ENCODE measurements at regions of chr4 and their contacts with region 1.

Region 1: GRCh38 chr4:47926639-47927258 is 12.4 kb upstream of the NFXL1 start:
- DNase-seq: peak; percentile 67
- H3K4me3 Mint-ChIP-seq: peak overlapping the region; percentile 73
- H3K27ac Mint-ChIP-seq: peak overlapping the region; percentile 53
- H3K4me1 Mint-ChIP-seq: peaks cover 18% of the 10 kb centered on the region
- H3K27me3 Mint-ChIP-seq: no peaks in the 10 kb centered on the region
- CTCF ChIP-seq: peak; percentile 56

Region 2: GRCh38 chr4:47713128-47713834 is 213.5 kb before region 1 on chr4:
- CTCF ChIA-PET with region 1: no interaction called
- intact Hi-C with region 1: no loop called
- DNase-seq: no peak
- H3K4me3 Mint-ChIP-seq: no peak overlapping the region
- H3K27ac Mint-ChIP-seq: no peak overlapping the region
- H3K4me1 Mint-ChIP-seq: no peaks in the 10 kb centered on the region
- H3K27me3 Mint-ChIP-seq: peaks cover 8% of the 10 kb centered on the region
- CTCF ChIP-seq: no peak

Region 3: GRCh38 chr4:47990145-47990544 is 63.4 kb after region 1 on chr4:
- CTCF ChIA-PET with region 1: no interaction called
- intact Hi-C with region 1: no loop called
- DNase-seq: no peak
- H3K4me3 Mint-ChIP-seq: no peak overlapping the region
- H3K27ac Mint-ChIP-seq: no peak overlapping the region
- H3K4me1 Mint-ChIP-seq: no peaks in the 10 kb centered on the region
- H3K27me3 Mint-ChIP-seq: no peaks in the 10 kb centered on the region
- CTCF ChIP-seq: no peak

Region 4: DNA sequence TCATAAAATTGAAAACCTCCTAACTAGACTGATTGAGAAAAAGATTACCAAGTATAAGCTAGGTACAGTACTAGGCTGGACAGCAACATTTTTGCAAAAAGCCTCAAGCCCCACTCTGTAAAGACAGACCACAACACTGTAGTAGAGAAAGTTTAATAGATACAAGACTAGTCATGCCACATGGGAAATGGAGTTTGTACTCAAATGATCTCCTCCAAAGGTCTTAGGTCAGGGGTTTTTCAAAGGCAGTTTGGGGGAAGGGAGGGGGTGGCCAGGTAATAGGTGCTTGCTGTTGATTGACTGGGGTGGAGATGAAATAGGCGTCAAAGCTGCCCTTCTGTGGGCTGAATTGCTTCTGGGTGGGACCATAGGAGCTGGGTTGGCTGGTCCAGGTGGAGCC is 75.5 kb after region 1 on chr4:
- CTCF ChIA-PET with region 1: no interaction called
- intact Hi-C with region 1: loop called (anchors 5 kb)
- DNase-seq: no peak
- H3K4me3 Mint-ChIP-seq: no peak overlapping the region
- H3K27ac Mint-ChIP-seq: no peak overlapping the region
- H3K4me1 Mint-ChIP-seq: no peaks in the 10 kb centered on the region
- H3K27me3 Mint-ChIP-seq: no peaks in the 10 kb centered on the region
- CTCF ChIP-seq: no peak

Region 5: DNA sequence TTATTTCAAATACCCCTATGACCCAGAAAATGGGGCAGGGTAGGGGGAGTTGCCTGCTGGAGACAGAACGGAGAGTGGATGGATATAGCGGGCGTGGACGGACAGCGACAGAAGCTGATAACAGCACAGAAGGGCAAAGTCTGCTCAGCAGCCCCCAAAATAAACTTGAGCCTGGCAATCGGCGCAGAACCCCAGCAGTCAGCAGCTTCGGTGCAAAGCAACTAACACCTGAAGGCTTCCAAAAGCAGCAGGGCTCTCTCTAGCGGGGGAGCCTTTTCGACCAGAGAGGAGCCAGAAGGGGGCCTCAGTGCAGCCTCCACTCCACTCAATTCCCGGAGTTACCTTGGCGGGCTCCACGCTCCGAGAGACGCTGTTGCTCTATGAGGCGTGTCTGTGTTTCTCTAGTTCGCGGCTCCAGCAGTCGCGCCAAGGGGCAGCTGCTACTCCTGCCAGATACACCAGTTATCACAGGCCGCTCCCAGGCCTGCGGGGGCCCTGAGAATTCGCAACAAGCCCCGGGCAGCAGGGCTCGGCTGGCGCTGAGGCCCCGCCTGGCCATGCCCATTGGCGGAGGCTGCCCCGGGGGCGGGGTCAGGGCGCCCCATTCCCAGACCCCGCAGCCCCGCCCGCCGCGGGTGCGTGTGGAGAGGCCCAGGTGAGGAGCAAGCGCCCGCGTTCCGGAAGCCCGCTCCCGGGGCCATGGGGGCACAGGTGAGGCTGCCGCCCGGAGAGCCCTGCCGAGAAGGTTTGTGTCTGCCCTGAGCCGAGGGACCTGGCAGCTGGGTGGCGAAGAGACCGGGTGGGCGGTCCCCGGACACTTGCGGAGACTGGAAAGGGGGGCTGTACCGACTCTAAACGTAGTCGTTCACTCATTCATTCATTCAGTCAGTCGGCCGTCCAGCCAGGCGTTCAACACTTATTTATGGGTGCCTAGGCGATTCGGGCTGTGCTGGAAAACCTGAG is 89.7 kb after region 1 on chr4 and contains the starts of genes CNGA1 and NIPAL1:
- CTCF ChIA-PET with region 1: no interaction called
- intact Hi-C with region 1: loop called (anchors 5 kb)
- DNase-seq: peak; percentile 93
- H3K4me3 Mint-ChIP-seq: peak within 1 kb of the TSS; percentile 89
- H3K27ac Mint-ChIP-seq: peak within 1 kb of the TSS; percentile 78
- H3K4me1 Mint-ChIP-seq: peaks cover 14% of the 10 kb centered on the region
- H3K27me3 Mint-ChIP-seq: no peaks in the 10 kb centered on the region
- CTCF ChIP-seq: no peak
- total RNA-seq, gene CNGA1: 2.2 and 2.4 TPM in 2 replicates
- total RNA-seq, gene NIPAL1: 17.0 and 21.0 TPM in 2 replicates

Region 6: DNA sequence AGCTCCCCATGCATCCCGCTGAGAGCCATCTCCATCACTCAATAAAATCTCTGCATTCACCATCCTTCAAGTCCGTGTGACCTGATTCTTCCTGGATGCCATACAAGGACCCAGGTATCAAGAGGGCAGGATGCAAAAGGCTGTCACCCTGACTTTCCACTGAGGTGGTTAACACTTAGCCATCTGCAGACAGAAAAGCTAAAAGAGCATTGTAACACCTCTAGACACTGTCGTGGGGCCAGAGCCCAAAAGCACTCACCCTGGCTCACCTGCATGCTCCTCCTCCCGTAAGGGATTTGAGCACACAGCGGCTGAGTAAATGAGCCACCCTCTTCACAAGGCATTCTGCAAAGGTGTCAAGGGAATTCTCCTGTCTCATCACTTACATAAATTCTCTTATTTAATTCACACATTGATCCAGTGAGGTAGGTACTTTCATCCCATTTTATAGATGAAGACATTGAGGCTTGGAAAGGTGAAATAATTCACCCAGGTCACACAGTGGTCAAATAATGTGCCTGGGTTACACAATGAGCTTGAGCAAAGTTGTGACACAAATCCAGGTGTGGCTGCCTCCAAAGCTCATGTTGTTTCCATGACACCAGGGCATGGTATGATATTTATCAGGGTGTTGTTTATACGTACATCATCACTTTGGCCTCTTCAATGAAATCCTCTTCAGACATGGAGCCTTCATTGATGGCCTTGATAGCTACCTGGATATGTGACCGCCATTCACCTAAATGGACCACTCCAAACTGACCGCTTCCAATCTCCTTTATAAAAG is 159.3 kb after region 1 on chr4:
- CTCF ChIA-PET with region 1: no interaction called
- intact Hi-C with region 1: loop called (anchors 2 kb)
- DNase-seq: no peak
- H3K4me3 Mint-ChIP-seq: no peak overlapping the region
- H3K27ac Mint-ChIP-seq: no peak overlapping the region
- H3K4me1 Mint-ChIP-seq: peaks cover 44% of the 10 kb centered on the region
- H3K27me3 Mint-ChIP-seq: no peaks in the 10 kb centered on the region
- CTCF ChIP-seq: no peak

Region 7: GRCh38 chr4:48141048-48141447 is 214.3 kb after region 1 on chr4:
- CTCF ChIA-PET with region 1: no interaction called
- intact Hi-C with region 1: loop called (anchors 5 kb)
- DNase-seq: no peak
- H3K4me3 Mint-ChIP-seq: no peak overlapping the region
- H3K27ac Mint-ChIP-seq: no peak overlapping the region
- H3K4me1 Mint-ChIP-seq: peaks cover 17% of the 10 kb centered on the region
- H3K27me3 Mint-ChIP-seq: no peaks in the 10 kb centered on the region
- CTCF ChIP-seq: no peak

Measured in Calu3 (cell line).